ENCODE measurements at regions of chr1 and their contacts with region 1.

Region 1: DNA sequence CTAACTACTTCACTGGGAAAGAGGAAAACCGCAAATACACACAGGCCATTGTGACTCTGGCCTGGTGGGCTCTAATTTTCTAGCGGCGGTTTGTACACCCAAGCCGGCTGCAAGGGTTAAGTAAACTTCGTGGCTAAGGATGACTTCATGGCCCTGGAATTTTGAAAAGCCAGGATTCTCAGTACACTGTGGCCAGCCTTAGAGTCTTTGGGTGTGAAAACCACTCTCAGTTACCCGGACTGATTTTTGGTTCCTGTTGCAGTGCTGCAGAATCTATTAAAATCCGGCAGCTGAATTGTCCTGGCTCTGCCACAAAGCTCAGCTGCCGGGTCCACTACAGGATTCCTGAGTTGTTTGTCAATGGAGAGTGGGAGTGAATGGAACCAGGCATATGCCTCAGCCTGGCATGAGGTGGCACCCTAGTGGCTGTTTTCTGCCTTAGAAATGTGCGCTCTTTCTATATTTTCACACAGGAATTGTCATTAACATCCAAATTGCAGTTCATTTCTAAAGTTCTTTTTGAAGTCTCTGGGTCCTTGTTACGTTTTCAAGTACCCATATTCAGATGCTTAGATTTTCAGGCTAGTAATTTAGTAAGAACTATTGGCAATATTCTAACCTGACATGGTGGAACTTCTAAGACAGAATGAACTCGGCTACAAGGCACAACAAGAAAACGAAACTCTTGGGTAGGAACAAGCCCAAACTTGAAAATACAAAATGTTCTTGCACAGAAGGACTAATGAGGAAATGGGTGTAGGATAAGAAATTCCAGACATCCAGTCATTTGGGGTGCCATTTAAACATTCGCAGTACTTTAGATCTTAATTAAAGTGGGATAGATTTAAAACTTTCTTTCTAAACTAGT is 255.9 kb downstream of the NFIA start:
- DNase-seq: peak; percentile 96
- ATAC-seq: peak; percentile 96
- H3K4me3 ChIP-seq: peak overlapping the region; percentile 66
- H3K27ac ChIP-seq: peak overlapping the region; percentile 67
- H3K4me1 ChIP-seq: peaks cover 27% of the 10 kb centered on the region
- H3K27me3 ChIP-seq: no peaks in the 10 kb centered on the region
- CTCF ChIP-seq: peak; percentile 93

Region 2: GRCh38 chr1:60848583-60849188 is 489.5 kb before region 1 on chr1:
- CTCF ChIA-PET with region 1: no interaction called
- POLR2A ChIA-PET with region 1: no interaction called
- intact Hi-C with region 1: loop called (anchors 5 kb)
- DNase-seq: peak; percentile 55
- ATAC-seq: no peak
- H3K4me3 ChIP-seq: no peak overlapping the region
- H3K27ac ChIP-seq: no peak overlapping the region
- H3K4me1 ChIP-seq: no peaks in the 10 kb centered on the region
- H3K27me3 ChIP-seq: peaks cover 27% of the 10 kb centered on the region
- CTCF ChIP-seq: peak; percentile 76

Region 3: GRCh38 chr1:61077676-61078541 is 260.3 kb before region 1 on chr1:
- CTCF ChIA-PET with region 1: interaction called, 15 read pairs
- POLR2A ChIA-PET with region 1: no interaction called
- intact Hi-C with region 1: loop called (anchors 2 kb)
- DNase-seq: peak; percentile 99
- ATAC-seq: peak; percentile 45
- H3K4me3 ChIP-seq: peak overlapping the region; percentile 76
- H3K27ac ChIP-seq: peak overlapping the region; percentile 90
- H3K4me1 ChIP-seq: peaks cover 42% of the 10 kb centered on the region
- H3K27me3 ChIP-seq: no peaks in the 10 kb centered on the region
- CTCF ChIP-seq: no peak

Region 4: GRCh38 chr1:61244114-61244513 is 94.1 kb before region 1 on chr1:
- CTCF ChIA-PET with region 1: no interaction called
- POLR2A ChIA-PET with region 1: no interaction called
- intact Hi-C with region 1: loop called (anchors 5 kb)
- DNase-seq: peak; percentile 90
- ATAC-seq: peak; percentile 86
- H3K4me3 ChIP-seq: no peak overlapping the region
- H3K27ac ChIP-seq: no peak overlapping the region
- H3K4me1 ChIP-seq: peaks cover 28% of the 10 kb centered on the region
- H3K27me3 ChIP-seq: no peaks in the 10 kb centered on the region
- CTCF ChIP-seq: no peak

Region 5: GRCh38 chr1:61322769-61323168 is 15.4 kb before region 1 on chr1:
- CTCF ChIA-PET with region 1: no interaction called
- POLR2A ChIA-PET with region 1: no interaction called
- intact Hi-C with region 1: loop called (anchors 1 kb)
- DNase-seq: peak; percentile 92
- ATAC-seq: peak; percentile 78
- H3K4me3 ChIP-seq: peak overlapping the region; percentile 46; the same call in 1 of the 2 replicates
- H3K27ac ChIP-seq: peak overlapping the region; percentile 94
- H3K4me1 ChIP-seq: peaks cover 43% of the 10 kb centered on the region
- H3K27me3 ChIP-seq: no peaks in the 10 kb centered on the region
- CTCF ChIP-seq: no peak

Region 6: DNA sequence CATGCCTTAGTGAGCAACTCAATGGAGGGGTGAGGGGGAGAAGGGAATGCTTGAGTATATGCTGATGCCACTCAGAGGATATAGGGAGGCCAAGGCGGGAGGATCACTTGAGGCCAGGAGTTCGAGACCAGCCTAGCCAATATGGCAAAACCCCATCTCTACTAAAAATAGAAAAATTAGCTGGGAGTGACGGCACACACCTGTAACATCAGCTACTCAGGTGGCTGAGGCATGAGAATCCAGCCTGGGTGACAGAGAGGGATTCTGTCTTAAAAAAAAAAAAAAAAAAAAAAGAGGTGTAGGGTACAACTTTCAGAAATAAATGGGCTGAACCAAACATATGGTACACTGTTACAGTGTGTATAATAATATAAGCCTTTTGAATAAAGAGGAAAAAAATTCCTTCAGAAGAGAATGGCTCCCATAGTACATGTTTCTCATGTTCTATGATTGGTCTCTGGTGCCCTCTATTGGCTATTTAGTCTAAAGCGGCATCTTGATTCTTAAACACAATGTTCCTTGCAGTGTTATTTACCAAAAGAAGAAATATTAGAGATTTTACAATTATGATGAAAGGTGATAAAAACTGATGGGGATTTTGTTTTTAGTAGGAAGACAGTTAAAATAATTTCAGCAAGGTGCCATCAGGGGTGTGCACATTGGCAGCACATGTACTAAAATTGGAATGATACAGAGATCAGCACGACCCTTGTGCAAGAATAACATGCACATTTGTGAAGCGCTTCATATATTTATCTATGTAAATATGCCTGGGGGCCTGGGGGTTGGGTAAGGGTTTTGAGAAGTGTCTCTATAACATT is 513.8 kb after region 1 on chr1:
- CTCF ChIA-PET with region 1: no interaction called
- POLR2A ChIA-PET with region 1: no interaction called
- intact Hi-C with region 1: loop called (anchors 2 kb)
- DNase-seq: peak; percentile 79
- ATAC-seq: peak; percentile 81
- H3K4me3 ChIP-seq: no peak overlapping the region
- H3K27ac ChIP-seq: no peak overlapping the region
- H3K4me1 ChIP-seq: no peaks in the 10 kb centered on the region
- H3K27me3 ChIP-seq: no peaks in the 10 kb centered on the region
- CTCF ChIP-seq: peak; percentile 86